CD4-positive, alpha-beta T cell (primary cell): ENCODE measurements at regions of chr14 and their contacts with region 1.

Region 1: DNA sequence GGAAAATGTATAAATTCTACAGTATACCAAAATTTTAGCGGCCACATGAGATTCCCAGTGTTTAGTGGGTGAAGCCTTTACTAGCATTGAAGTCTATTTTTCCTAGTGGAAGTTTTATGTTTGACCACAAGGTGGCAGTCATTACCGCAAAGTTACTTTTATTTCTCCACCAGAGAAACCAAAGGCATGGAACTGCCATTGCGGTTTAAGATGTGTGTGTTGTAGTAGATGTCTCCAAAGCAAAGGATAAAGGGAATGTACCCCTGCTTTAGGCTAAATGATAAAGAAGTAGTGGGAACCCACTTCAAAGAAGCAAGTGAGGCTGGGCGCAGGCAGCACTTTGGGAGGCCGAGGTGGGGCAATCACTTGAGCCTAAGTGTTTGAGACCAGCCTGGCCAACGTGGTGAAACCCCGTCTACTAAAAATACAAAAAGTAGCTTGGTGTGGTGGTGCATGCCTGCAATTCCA is 140.5 kb downstream of the PRKCH start:
- DNase-seq: peak in 5 of 14 experiments; percentile 31 to 82 (median 76)
- ATAC-seq: peak; percentile 67
- H3K4me3 ChIP-seq: no peak overlapping the region
- H3K4me3 Mint-ChIP-seq: peak overlapping the region; percentile 2
- H3K27ac ChIP-seq: peak overlapping the region in 1 of 2 donors; percentile 10
- H3K27ac Mint-ChIP-seq: peak overlapping the region; percentile 73
- H3K4me1 ChIP-seq: peaks cover 40% of the 10 kb centered on the region
- H3K4me1 Mint-ChIP-seq: peaks cover 75% of the 10 kb centered on the region
- H3K27me3 ChIP-seq: no peaks in the 10 kb centered on the region
- H3K27me3 Mint-ChIP-seq: no peaks in the 10 kb centered on the region
- CTCF ChIP-seq: peak; percentile 80

Region 2: GRCh38 chr14:61493239-61493638 is 31.4 kb after region 1 on chr14:
- CTCF ChIA-PET with region 1: interaction called, 3 read pairs
- POLR2A ChIA-PET with region 1: no interaction called
- intact Hi-C with region 1: loop called in 1 of 2 experiments (anchors 2 kb)
- DNase-seq: no peak
- ATAC-seq: no peak
- H3K4me3 ChIP-seq: no peak overlapping the region
- H3K4me3 Mint-ChIP-seq: no peak overlapping the region
- H3K27ac ChIP-seq: no peak overlapping the region
- H3K27ac Mint-ChIP-seq: no peak overlapping the region
- H3K4me1 ChIP-seq: peaks cover 54% of the 10 kb centered on the region
- H3K4me1 Mint-ChIP-seq: peaks cover 21% of the 10 kb centered on the region
- H3K27me3 ChIP-seq: no peaks in the 10 kb centered on the region
- H3K27me3 Mint-ChIP-seq: no peaks in the 10 kb centered on the region
- CTCF ChIP-seq: no peak

Region 3: GRCh38 chr14:61503167-61503801 is 41.4 kb after region 1 on chr14:
- CTCF ChIA-PET with region 1: interaction called, 4 read pairs
- POLR2A ChIA-PET with region 1: interaction called, 3 read pairs
- intact Hi-C with region 1: loop called in 1 of 2 experiments (anchors 5 kb)
- DNase-seq: peak; percentile 37 to 82 (median 58)
- ATAC-seq: peak; percentile 86
- H3K4me3 ChIP-seq: no peak overlapping the region
- H3K4me3 Mint-ChIP-seq: peak overlapping the region; percentile 77
- H3K27ac ChIP-seq: peak overlapping the region; percentile 64 to 69
- H3K27ac Mint-ChIP-seq: no peak overlapping the region
- H3K4me1 ChIP-seq: peaks cover 73% of the 10 kb centered on the region
- H3K4me1 Mint-ChIP-seq: peaks cover 96% of the 10 kb centered on the region
- H3K27me3 ChIP-seq: no peaks in the 10 kb centered on the region
- H3K27me3 Mint-ChIP-seq: no peaks in the 10 kb centered on the region
- CTCF ChIP-seq: no peak

Region 4: GRCh38 chr14:61730756-61731373 is 269.0 kb after region 1 on chr14:
- CTCF ChIA-PET with region 1: no interaction called
- POLR2A ChIA-PET with region 1: interaction called, 3 read pairs
- intact Hi-C with region 1: loop called (anchors 1 kb)
- DNase-seq: peak in 4 of 14 experiments; percentile 38 to 61 (median 55)
- ATAC-seq: no peak
- H3K4me3 ChIP-seq: no peak overlapping the region
- H3K4me3 Mint-ChIP-seq: no peak overlapping the region
- H3K27ac ChIP-seq: peak overlapping the region in 1 of 2 donors; percentile 2
- H3K27ac Mint-ChIP-seq: peak overlapping the region; percentile 27
- H3K4me1 ChIP-seq: no peaks in the 10 kb centered on the region
- H3K4me1 Mint-ChIP-seq: peaks cover 38% of the 10 kb centered on the region
- H3K27me3 ChIP-seq: no peaks in the 10 kb centered on the region
- H3K27me3 Mint-ChIP-seq: no peaks in the 10 kb centered on the region
- CTCF ChIP-seq: peak; percentile 87

Region 5: GRCh38 chr14:61837336-61838229 is 375.7 kb after region 1 on chr14:
- CTCF ChIA-PET with region 1: no interaction called
- POLR2A ChIA-PET with region 1: interaction called, 3 read pairs
- intact Hi-C with region 1: loop called (anchors 1 kb)
- DNase-seq: peak; percentile 54 to 88 (median 68)
- ATAC-seq: peak; percentile 99
- H3K4me3 ChIP-seq: no peak overlapping the region
- H3K4me3 Mint-ChIP-seq: no peak overlapping the region
- H3K27ac ChIP-seq: no peak overlapping the region
- H3K27ac Mint-ChIP-seq: no peak overlapping the region
- H3K4me1 ChIP-seq: no peaks in the 10 kb centered on the region
- H3K4me1 Mint-ChIP-seq: no peaks in the 10 kb centered on the region
- H3K27me3 ChIP-seq: no peaks in the 10 kb centered on the region
- H3K27me3 Mint-ChIP-seq: peaks cover 6% of the 10 kb centered on the region
- CTCF ChIP-seq: peak; percentile 96

Region 6: GRCh38 chr14:62126879-62127478 is 665.1 kb after region 1 on chr14:
- CTCF ChIA-PET with region 1: no interaction called
- POLR2A ChIA-PET with region 1: no interaction called
- intact Hi-C with region 1: loop called (anchors 5 kb)
- DNase-seq: peak in 3 of 14 experiments; percentile 53 to 60 (median 58)
- ATAC-seq: peak; percentile 75
- H3K4me3 ChIP-seq: no peak overlapping the region
- H3K4me3 Mint-ChIP-seq: no peak overlapping the region
- H3K27ac ChIP-seq: no peak overlapping the region
- H3K27ac Mint-ChIP-seq: no peak overlapping the region
- H3K4me1 ChIP-seq: no peaks in the 10 kb centered on the region
- H3K4me1 Mint-ChIP-seq: no peaks in the 10 kb centered on the region
- H3K27me3 ChIP-seq: peaks cover 6 to 13% of the 10 kb centered on the region in 2 experiments
- H3K27me3 Mint-ChIP-seq: peaks cover 71% of the 10 kb centered on the region
- CTCF ChIP-seq: peak; percentile 74